Posterior vena cava (tissue), 2 donors: ENCODE measurements at regions of chr6 and their contacts with region 1.

Region 1: GRCh38 chr6:111864138-111865048 is 8.9 kb downstream of the FYN start:
- DNase-seq: no peak

Region 2: DNA sequence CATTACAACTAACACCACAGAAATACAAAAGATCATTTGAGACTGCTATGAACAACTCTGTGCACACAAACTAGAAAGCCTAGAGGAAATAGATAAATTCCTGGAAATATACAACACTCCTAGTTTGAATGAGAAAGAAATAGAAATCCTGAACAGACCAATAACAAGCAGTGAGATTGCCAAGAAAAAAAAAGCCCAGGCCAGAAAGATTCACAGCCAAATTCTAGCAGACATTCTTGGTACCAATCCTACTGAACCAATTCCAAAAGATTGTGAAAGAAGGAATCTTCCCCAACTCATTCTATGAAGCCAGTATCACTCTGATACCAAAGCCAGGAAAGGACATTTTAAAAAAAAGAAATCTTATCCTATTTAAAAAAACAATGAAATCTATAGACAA is 1042.1 kb before region 1 on chr6:
- intact Hi-C with region 1: loop called in 1 of 2 experiments (anchors 5 kb)
- DNase-seq: no peak

Region 3: GRCh38 chr6:111068510-111069205 is 795.7 kb before region 1 on chr6:
- intact Hi-C with region 1: no loop called
- DNase-seq: no peak

Region 4: DNA sequence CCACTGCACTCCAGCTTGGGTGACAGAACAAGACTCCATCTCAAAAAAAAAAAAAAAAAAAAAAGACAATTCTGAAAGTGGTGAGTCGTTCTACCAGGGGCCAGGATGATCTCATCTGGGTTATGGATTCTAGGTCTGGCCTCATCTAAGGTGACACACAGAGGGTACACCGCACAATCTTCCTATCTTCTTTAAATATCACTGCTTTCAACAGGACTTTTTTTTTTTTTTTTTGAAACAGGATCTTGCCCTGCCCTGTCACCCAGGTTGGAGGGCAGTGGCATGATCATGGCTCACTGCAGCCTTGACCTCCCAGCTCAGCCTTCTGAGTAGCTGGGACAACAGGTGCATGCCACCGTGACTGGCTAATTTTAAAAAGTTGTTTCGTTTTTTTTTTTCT is 709.4 kb before region 1 on chr6:
- intact Hi-C with region 1: no loop called
- DNase-seq: no peak